Transverse colon (tissue), 4 donors: ENCODE measurements at regions of chr17 and their contacts with region 1.

Region 1: DNA sequence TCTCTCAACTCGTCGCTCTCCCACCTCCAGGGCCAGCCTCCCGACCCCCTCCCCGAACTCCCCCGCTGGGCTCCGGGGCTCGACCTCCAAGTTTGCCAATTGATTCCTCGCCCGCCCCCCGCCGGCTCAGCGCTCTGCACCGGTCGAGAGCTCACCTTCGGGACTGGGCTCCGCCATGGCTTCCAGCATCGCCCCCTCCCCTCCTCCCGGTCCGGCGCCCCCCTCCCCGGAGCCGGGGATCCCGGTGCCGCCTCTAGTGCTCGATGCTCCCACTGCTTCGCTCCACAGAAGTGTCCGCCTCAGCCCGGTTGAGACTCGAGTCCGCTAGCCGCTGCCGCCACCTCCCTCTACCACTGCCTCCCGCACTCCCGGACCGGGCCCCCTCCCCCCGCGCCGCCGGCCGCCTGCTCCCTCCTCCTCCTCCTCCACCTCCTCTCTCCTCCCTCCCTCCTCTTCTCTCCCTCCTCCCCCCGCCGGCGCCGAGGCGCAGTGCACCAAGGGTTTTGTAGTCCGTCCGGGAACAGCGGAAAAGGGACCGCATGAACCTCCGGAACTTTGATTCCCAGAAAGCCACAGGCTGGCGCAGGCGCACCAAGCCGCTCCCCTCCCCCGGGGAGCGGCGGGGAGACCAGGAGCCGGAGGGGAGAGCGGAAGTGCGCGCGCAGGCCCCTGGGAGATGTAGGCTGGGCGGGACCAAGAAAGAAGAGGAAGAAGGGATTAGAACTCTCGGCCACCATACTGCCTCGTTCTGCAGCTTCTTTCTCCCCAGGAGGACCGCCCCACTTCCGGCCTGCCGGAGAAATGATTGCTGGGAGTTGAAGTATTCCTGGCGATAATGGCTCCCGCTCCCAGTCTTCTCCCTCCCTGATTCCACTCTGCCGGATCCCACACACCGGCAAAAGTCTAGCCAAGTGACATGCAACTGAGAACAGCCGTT is at the start of gene PHF23:
- DNase-seq: peak; percentile 99
- H3K4me3 ChIP-seq: peak within 1 kb of the TSS; percentile 81 to 95 (median 86)
- H3K27ac ChIP-seq: peak within 1 kb of the TSS; percentile 96 to 99 (median 98)
- H3K4me1 ChIP-seq: peaks cover 31 to 61% (median 45%) of the 10 kb centered on the region in 4 donors
- H3K27me3 ChIP-seq: no peaks in the 10 kb centered on the region
- CTCF ChIP-seq: peak in 3 of 5 experiments; percentile 20 to 77 (median 70)
- EP300 ChIP-seq: peak; percentile 48
- POLR2A ChIP-seq: peak; percentile 80
- total RNA-seq, gene PHF23: 20.6 to 33.5 (median 27.8) TPM

Region 2: DNA sequence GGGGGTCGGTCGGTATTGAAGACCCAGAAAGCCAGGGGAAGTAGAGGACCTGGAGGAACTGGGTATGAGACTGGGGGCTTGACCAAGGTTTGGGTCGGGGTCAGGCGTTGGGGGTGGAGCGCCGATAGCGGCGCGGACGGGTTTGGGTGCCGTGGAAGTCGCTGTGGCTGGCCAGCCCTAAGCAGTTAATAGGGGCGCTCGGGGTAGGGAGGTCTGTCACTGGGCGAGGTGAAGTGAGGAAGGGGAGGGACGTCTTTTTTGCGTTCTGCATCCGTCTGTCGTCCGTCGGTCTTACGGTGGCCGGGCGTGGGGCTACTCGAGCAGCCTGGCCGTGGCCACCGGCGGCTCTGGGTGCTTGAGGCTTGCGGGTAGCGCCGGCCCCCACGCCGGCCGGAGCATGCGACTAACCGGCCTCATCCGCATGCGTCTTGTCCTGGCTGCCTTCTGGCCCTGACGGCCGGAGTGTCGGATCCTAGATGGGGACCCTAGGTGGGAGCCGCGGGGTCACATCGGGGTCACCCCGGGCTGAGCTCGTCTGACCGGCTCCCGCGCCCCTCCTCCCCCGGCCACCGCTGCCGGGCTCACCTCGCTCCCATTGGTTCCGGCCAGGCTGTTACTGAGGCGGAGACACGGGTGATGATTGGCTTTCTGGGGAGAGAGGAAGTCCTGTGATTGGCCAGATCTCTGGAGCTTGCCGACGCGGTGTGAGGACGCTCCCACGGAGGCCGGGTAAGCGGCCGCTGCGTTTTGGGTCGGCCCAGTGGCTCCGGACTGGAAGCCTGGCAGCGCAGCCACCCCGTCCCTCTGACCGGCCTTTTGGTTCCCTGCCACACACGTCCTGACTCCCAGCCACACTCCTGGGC is 605.2 kb after region 1 on chr17:
- in situ Hi-C with region 1: no loop called
- intact Hi-C with region 1: loop called (anchors 5 kb)
- DNase-seq: peak; percentile 94
- H3K4me3 ChIP-seq: peak overlapping the region; percentile 45 to 78 (median 59)
- H3K27ac ChIP-seq: peak overlapping the region; percentile 97 to 99 (median 99)
- H3K4me1 ChIP-seq: peaks cover 22 to 53% (median 28%) of the 10 kb centered on the region in 4 donors
- H3K27me3 ChIP-seq: no peaks in the 10 kb centered on the region
- CTCF ChIP-seq: no peak
- EP300 ChIP-seq: no peak
- POLR2A ChIP-seq: peak; percentile 75

Region 3: DNA sequence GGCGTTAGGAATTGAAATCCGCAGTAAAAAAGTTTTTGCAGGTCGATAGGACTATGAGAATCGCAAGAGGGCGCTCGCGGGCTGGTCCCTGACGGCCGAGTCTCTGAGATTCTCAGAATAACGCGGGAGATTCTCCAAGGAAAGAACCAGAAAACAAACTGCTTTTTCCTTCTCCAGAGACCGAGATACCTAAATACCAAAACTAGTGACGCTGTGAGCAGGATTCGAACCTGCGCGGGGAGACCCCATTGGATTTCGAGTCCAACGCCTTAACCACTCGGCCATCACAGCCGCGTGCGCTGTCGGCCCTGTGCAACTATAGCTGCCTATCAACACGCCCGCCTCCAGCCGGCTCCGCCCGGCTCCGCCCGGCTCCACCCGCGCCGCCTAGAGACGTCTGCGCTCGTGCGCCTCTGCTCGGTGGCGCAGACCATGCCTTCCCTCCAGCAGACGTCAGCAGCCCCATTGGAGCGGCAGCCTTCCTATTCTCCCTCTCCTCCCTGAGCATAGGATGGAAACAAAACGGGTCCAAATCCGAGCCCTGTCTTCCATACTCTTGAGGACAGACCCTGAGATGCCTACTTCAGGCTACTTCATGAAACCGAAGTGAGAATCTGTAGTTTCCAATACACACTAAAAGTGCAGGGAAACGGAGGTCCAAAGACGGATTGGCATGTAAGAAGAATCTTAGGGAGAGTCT is 899.5 kb after region 1 on chr17:
- in situ Hi-C with region 1: loop called in 1 of 4 experiments (anchors 25 kb)
- intact Hi-C with region 1: no loop called
- DNase-seq: peak; percentile 96
- H3K4me3 ChIP-seq: peak overlapping the region in 2 of 4 donors; percentile 19 to 32
- H3K27ac ChIP-seq: peak overlapping the region; percentile 86 to 93 (median 90)
- H3K4me1 ChIP-seq: peaks cover 7 to 27% (median 19%) of the 10 kb centered on the region in 4 donors
- H3K27me3 ChIP-seq: no peaks in the 10 kb centered on the region
- CTCF ChIP-seq: peak; percentile 83 to 98 (median 89)
- EP300 ChIP-seq: no peak
- POLR2A ChIP-seq: peak; percentile 74